Caco-2 (cell line): ENCODE measurements at regions of chr14 and their contacts with region 1.

Region 1: GRCh38 chr14:60485598-60486251 is at the start of gene C14orf39:
- DNase-seq: no peak
- H3K4me3 ChIP-seq: no peak within 1 kb of the TSS
- H3K4me3 Mint-ChIP-seq: no peak within 1 kb of the TSS
- H3K27ac Mint-ChIP-seq: no peak within 1 kb of the TSS
- H3K4me1 ChIP-seq: no peaks in the 10 kb centered on the region
- H3K4me1 Mint-ChIP-seq: no peaks in the 10 kb centered on the region
- H3K27me3 ChIP-seq: no peaks in the 10 kb centered on the region
- H3K27me3 Mint-ChIP-seq: peaks cover 3% of the 10 kb centered on the region
- CTCF ChIP-seq: no peak
- total RNA-seq, gene C14orf39: not detected in 2 replicates

Region 2: GRCh38 chr14:60204843-60205774 is 280.6 kb before region 1 on chr14:
- CTCF ChIA-PET with region 1: no interaction called
- POLR2A ChIA-PET with region 1: no interaction called
- intact Hi-C with region 1: loop called (anchors 5 kb)
- DNase-seq: no peak
- H3K4me3 ChIP-seq: no peak overlapping the region
- H3K4me3 Mint-ChIP-seq: no peak overlapping the region
- H3K27ac Mint-ChIP-seq: no peak overlapping the region
- H3K4me1 ChIP-seq: no peaks in the 10 kb centered on the region
- H3K4me1 Mint-ChIP-seq: no peaks in the 10 kb centered on the region
- H3K27me3 ChIP-seq: no peaks in the 10 kb centered on the region; the same call in 1 of the 2 replicates
- H3K27me3 Mint-ChIP-seq: peaks cover 30% of the 10 kb centered on the region
- CTCF ChIP-seq: no peak

Region 3: DNA sequence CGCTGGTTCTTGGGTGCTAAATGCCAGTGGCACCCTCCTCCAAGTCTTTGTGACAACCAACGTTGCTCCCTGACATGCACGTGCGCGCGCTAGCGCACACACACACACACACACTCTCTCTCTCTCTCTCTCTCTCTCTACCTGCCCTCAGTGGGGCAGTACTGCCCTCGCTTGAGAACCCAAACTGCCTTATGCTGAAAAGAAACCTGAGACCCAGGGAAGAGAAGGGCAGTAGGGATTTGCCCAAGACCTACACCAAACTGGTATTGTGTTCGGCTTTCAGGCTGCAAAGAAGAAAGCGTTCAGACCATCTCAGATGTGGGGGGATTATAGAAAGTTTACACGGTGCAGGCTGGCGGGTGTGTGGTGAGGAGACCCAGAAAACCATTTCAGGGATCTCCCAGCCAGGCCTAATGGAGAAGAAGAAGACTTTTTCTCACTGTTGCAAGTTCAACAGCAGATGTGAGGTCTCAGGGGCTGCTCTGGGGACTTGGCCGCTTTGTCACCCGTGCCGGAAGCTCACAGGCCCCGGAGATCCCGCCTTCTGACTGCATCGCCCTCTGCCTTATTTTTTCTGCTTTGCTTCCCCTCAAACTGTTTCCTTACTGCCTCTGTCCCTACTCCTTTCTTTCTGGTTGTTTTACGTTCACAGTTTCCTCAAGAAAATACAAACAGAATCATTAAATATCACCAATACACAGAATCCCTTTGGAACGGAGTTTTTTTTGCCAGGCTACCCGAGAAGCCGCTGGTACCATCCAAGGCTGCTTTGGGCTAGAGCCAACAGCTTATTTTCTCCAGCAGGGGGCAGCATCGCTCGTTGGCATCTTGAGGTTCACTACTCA is 154.3 kb before region 1 on chr14:
- CTCF ChIA-PET with region 1: no interaction called
- POLR2A ChIA-PET with region 1: no interaction called
- intact Hi-C with region 1: loop called (anchors 5 kb)
- DNase-seq: peak; percentile 73 to 78
- H3K4me3 ChIP-seq: peak overlapping the region; percentile 43
- H3K4me3 Mint-ChIP-seq: peak overlapping the region; percentile 88
- H3K27ac Mint-ChIP-seq: peak overlapping the region; percentile 68
- H3K4me1 ChIP-seq: no peaks in the 10 kb centered on the region
- H3K4me1 Mint-ChIP-seq: no peaks in the 10 kb centered on the region
- H3K27me3 ChIP-seq: no peaks in the 10 kb centered on the region
- H3K27me3 Mint-ChIP-seq: peaks cover 7% of the 10 kb centered on the region
- CTCF ChIP-seq: peak; percentile 74 to 84

Region 4: DNA sequence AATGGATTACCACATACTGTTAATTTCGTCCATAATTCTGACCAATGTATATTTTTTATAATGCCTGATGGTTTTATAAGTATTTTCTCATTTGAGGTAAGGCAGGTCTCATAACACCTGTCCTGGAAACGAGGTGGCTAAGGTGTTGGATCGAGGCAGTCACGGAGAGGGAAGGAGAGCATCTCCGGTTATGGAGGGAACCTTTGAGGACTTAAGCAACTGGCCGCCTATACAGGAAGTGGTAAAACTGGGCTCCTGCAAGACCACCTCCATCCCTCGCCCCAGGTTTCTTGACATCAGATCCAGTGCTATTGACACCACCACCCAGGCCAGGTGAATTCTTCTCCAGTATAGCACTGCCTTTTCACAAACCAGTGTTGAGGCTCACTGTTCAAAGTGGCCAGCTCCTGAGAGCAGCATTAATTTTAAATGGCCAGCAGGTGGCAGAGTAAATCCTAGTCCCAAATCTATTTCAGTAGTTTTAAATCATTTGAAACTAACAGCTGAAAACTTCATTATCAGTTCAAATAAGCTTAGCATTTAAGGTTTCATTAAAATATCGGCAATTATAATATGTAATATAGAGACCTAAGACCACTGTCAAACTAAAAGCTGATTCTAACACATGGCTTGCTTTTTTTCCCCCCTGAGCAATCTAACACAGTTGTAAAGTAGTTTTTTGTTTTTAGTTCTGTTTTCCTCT is 135.9 kb before region 1 on chr14:
- CTCF ChIA-PET with region 1: no interaction called
- POLR2A ChIA-PET with region 1: no interaction called
- intact Hi-C with region 1: loop called (anchors 1 kb)
- DNase-seq: peak in 1 of 2 experiments; percentile 33
- H3K4me3 ChIP-seq: no peak overlapping the region
- H3K4me3 Mint-ChIP-seq: no peak overlapping the region
- H3K27ac Mint-ChIP-seq: no peak overlapping the region
- H3K4me1 ChIP-seq: no peaks in the 10 kb centered on the region
- H3K4me1 Mint-ChIP-seq: no peaks in the 10 kb centered on the region
- H3K27me3 ChIP-seq: no peaks in the 10 kb centered on the region
- H3K27me3 Mint-ChIP-seq: peaks cover 8% of the 10 kb centered on the region
- CTCF ChIP-seq: peak; percentile 53 to 54